HepG2 (cell line): ENCODE measurements at regions of chr12 and their contacts with region 1.

Region 1: DNA sequence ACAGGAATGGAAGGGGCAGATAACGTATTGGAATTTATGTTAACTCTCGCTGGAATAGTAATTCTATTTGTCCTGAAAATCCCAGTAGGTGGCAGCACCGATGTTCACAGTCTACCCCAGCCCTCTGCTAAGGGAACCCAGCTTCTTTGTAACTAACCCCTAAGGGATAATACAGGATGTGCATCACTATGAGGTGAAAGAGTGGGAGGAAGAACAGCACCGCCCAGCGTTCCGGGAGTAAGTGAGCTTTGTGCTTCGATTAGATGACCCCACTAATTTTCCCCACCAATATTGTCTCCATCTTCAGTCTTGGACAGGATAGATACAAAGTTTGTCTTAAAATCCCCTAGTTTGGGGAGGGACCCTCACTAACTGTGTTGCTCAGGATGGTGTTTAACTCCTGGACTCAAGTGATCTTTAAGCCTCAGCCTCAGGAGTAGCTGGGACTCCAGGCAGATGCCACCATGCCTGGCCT is 2.7 kb downstream of the SLC2A3 start:
- DNase-seq: peak; percentile 93
- ATAC-seq: peak; percentile 96
- H3K4me3 ChIP-seq: peak overlapping the region; percentile 84 to 99 (median 84)
- H3K27ac ChIP-seq: peak overlapping the region; percentile 75
- H3K4me1 ChIP-seq: peaks cover 65% of the 10 kb centered on the region
- H3K27me3 ChIP-seq: no peaks in the 10 kb centered on the region; a peak in 1 of 5 replicates
- CTCF ChIP-seq: peak; percentile 82
- EP300 ChIP-seq: no peak
- POLR2A ChIP-seq: no peak
- RAD21 ChIP-seq: peak; percentile 78

Region 2: DNA sequence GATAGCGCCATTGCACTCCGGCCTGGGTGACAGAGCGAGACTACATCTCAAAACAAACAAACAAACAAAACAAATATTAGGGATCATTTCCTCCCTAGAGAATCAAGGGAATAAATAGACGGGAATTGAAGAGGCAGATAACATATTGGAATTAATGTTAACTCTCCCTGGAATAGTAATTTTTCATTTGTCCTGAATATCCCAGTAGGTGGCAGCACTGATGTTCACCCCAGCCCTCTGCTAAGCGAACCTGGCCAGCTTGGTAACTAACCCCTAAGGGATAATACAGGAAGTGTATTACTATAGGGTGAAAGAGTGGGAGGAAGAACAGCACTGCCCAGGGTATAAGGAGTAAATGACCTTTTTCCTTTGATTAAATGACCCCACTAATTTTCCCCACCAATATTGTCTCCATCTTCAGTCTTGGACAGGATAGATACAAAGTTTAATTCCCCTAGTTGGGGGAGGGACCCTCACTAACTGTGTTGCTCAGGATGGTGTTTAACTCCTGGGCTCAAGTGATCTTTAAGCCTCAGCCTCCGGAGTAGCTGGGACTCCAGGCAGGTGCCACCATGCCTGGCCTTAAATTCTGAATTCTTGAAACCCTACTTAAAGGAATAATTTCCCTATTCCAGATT is 101.1 kb before region 1 on chr12:
- CTCF ChIA-PET with region 1: interaction called, 10 read pairs
- POLR2A ChIA-PET with region 1: interaction called, 4 read pairs
- in situ Hi-C with region 1: no loop called
- intact Hi-C with region 1: no loop called
- DNase-seq: peak; percentile 62
- ATAC-seq: peak; percentile 85
- H3K4me3 ChIP-seq: no peak overlapping the region
- H3K27ac ChIP-seq: peak overlapping the region; percentile 17
- H3K4me1 ChIP-seq: peaks cover 41% of the 10 kb centered on the region
- H3K27me3 ChIP-seq: no peaks in the 10 kb centered on the region
- CTCF ChIP-seq: peak; percentile 62
- EP300 ChIP-seq: no peak
- POLR2A ChIP-seq: no peak
- RAD21 ChIP-seq: peak; percentile 61

Region 3: GRCh38 chr12:7859552-7859951 is 73.7 kb before region 1 on chr12:
- CTCF ChIA-PET with region 1: interaction called, 20 read pairs
- POLR2A ChIA-PET with region 1: interaction called, 6 read pairs
- in situ Hi-C with region 1: loop called (anchors 10 kb)
- intact Hi-C with region 1: loop called (anchors 1 kb)
- DNase-seq: no peak
- ATAC-seq: no peak
- H3K4me3 ChIP-seq: no peak overlapping the region
- H3K27ac ChIP-seq: no peak overlapping the region
- H3K4me1 ChIP-seq: peaks cover 63% of the 10 kb centered on the region
- H3K27me3 ChIP-seq: no peaks in the 10 kb centered on the region
- CTCF ChIP-seq: no peak
- EP300 ChIP-seq: no peak
- POLR2A ChIP-seq: no peak
- RAD21 ChIP-seq: no peak

Region 4: GRCh38 chr12:7892186-7892980 is 40.9 kb before region 1 on chr12:
- CTCF ChIA-PET with region 1: no interaction called
- POLR2A ChIA-PET with region 1: interaction called, 13 read pairs
- in situ Hi-C with region 1: no loop called
- intact Hi-C with region 1: no loop called
- DNase-seq: no peak
- ATAC-seq: no peak
- H3K4me3 ChIP-seq: no peak overlapping the region
- H3K27ac ChIP-seq: peak overlapping the region; percentile 99
- H3K4me1 ChIP-seq: peaks cover 64% of the 10 kb centered on the region
- H3K27me3 ChIP-seq: no peaks in the 10 kb centered on the region; a peak in 1 of 5 replicates
- CTCF ChIP-seq: no peak
- EP300 ChIP-seq: no peak
- POLR2A ChIP-seq: no peak
- RAD21 ChIP-seq: no peak

Region 5: DNA sequence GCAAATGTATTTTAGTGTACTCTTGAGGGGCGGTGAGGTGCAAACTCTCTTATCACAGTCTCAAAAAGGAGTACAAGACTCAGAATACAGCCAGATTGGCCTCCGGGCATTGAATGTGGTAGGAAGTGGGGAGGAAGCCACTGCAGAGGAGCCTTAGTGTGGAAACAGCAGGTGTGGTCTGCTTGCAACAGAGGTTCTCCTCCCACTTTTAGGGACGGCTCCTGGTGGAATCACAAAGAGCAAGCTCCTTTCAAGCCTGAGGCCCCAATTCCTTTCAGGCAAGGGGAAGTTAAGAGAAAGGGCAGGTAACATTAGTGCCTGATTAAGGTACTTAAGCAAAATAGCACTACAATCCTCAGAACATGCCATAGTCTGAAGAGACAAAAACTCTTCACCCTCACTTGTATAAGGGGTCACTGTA is 26.4 kb after region 1 on chr12:
- CTCF ChIA-PET with region 1: interaction called, 3 read pairs
- POLR2A ChIA-PET with region 1: interaction called, 24 read pairs
- in situ Hi-C with region 1: no loop called
- intact Hi-C with region 1: loop called (anchors 1 kb)
- DNase-seq: peak; percentile 44
- ATAC-seq: peak; percentile 68
- H3K4me3 ChIP-seq: peak overlapping the region; percentile 43 to 66 (median 60)
- H3K27ac ChIP-seq: no peak overlapping the region
- H3K4me1 ChIP-seq: peaks cover 24% of the 10 kb centered on the region
- H3K27me3 ChIP-seq: no peaks in the 10 kb centered on the region
- CTCF ChIP-seq: no peak
- EP300 ChIP-seq: no peak
- POLR2A ChIP-seq: no peak
- RAD21 ChIP-seq: no peak